ENCODE measurements at regions of chr1 and their contacts with region 1.

Region 1: DNA sequence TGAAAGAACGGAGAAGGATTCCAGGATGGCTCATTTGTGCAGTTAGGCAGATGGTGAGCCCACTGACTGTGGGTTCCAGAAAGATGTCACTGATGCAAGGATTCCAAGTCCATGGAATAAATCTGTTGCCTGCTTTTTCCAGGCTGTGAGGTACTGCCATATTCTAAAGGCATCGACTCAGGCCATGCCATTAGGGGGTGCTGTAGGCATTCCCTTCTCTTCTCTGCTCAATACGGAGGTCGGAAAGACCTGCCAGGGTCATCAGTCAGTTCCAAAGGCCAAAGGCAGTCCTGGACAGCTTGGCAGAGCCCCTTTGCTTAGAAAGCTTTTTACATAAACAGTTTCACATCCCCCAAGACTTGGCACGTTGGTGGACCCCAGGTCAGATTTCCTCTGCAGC is 31.7 kb upstream of the TMEM125 start:
- DNase-seq: peak in 3 of 4 donors; percentile 26 to 65 (median 57)
- ATAC-seq: peak; percentile 93
- H3K4me3 ChIP-seq: no peak overlapping the region
- H3K27ac ChIP-seq: peak overlapping the region in 1 of 2 donors; percentile 48
- H3K4me1 ChIP-seq: peaks cover 3 to 16% of the 10 kb centered on the region in 2 donors
- H3K27me3 ChIP-seq: no peaks in the 10 kb centered on the region
- CTCF ChIP-seq: peak; percentile 60 to 64

Region 2: GRCh38 chr1:43389326-43390313 is 151.5 kb after region 1 on chr1 and contains the starts of genes MED8 and SZT2:
- intact Hi-C with region 1: loop called in 1 of 2 experiments (anchors 10 kb)
- DNase-seq: peak; percentile 94 to 96 (median 95)
- ATAC-seq: peak; percentile 99
- H3K4me3 ChIP-seq: peak within 1 kb of the TSS; percentile 78 to 89
- H3K27ac ChIP-seq: peak within 1 kb of the TSS; percentile 78 to 81
- H3K4me1 ChIP-seq: peaks cover 14 to 37% of the 10 kb centered on the region in 2 donors
- H3K27me3 ChIP-seq: no peaks in the 10 kb centered on the region
- CTCF ChIP-seq: no peak
- polyA plus RNA-seq, gene MED8: 32.1 to 37.6 (median 36.2) TPM
- polyA plus RNA-seq, gene SZT2: 25.3 to 38.1 (median 30.8) TPM

Region 3: GRCh38 chr1:43414634-43415223 is 176.6 kb after region 1 on chr1:
- intact Hi-C with region 1: loop called (anchors 10 kb)
- DNase-seq: peak in 2 of 4 donors; percentile 27 to 52
- ATAC-seq: peak; percentile 92
- H3K4me3 ChIP-seq: no peak overlapping the region
- H3K27ac ChIP-seq: no peak overlapping the region
- H3K4me1 ChIP-seq: no peaks in the 10 kb centered on the region
- H3K27me3 ChIP-seq: no peaks in the 10 kb centered on the region
- CTCF ChIP-seq: peak; percentile 45 to 80

Measured in left lung (tissue), 14 donors.